ENCODE measurements at regions of chr16 and their contacts with region 1.

Region 1: DNA sequence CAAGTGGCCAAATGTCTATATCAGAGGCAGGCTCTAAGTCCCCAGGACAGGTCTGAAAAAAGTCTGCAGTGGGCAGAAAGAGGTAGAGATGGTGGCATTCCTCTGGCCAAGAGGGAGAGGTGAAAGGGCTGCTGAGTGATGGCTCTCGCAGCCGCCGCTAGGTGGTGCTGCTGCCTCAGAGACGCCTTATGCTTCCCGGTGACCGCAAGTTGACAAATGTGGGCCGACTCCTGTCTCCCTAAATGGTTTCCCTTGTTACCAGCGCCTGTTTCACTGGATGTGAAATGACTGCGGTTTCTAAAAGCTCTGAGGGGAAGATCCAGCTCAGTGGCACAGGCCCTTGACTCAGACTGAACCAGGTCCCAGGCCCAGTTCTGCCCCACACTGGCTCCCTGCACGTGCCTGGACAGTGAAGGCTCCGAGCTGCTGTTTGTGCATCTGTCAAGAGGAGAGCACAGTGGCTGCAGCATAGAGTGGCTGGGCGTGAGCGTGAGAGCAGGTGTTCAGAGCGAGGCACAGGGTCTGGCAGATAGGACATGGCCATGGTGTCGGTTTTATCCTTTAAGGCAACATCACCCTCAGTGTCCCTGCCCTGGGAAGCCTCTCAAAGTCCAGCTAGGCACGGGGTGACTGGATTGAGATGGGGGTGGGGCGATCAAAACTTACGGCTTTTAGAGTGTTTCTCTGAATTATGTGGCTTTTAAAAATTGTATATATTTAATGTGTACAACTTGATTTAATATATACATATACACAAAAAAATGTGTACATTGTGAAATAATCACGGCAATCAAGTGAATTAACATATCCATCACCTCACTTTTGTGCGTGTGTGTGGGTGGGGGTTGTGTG is 19.9 kb downstream of the CLEC16A start:
- DNase-seq: peak; percentile 77
- H3K4me3 ChIP-seq: no peak overlapping the region
- H3K27ac ChIP-seq: no peak overlapping the region
- H3K4me1 ChIP-seq: peaks cover 16% of the 10 kb centered on the region
- H3K27me3 ChIP-seq: no peaks in the 10 kb centered on the region
- CTCF ChIP-seq: peak; percentile 96 to 99

Region 2: DNA sequence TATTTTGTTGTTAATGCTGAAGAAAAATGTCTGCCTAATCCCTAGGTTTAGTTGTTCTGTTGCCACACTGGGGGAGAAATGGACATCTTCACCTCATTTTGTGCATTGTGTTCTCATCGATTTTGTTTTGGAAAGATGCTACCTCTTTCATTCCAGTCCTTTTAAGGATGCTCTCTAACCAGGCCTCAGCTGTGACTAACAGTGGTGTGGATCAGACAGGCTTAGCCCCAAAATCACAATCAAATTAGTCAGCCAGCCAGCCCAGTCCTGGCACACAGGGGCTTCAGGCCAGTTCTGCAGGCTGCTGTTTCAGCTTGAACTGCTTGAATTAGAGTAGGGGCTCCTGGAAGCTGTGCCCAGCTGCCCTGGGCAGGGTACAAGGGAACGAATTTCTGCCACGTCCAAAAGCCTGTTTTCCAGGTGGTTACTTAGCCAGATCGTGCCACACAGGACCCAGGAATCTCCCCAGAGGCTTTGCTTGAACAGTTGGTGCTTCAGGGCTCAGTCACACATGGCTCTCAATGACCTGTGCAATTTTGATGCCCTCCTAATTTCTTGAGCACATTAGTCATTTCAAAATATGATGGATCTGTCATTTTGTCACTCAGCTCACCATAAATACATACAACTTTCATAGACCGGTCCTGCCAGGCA is 40.8 kb after region 1 on chr16:
- CTCF ChIA-PET with region 1: no interaction called
- dilution Hi-C with region 1: no loop called
- in situ Hi-C with region 1: no loop called
- intact Hi-C with region 1: no loop called
- DNase-seq: peak; percentile 75
- H3K4me3 ChIP-seq: no peak overlapping the region
- H3K27ac ChIP-seq: peak overlapping the region; percentile 86
- H3K4me1 ChIP-seq: peaks cover 49% of the 10 kb centered on the region
- H3K27me3 ChIP-seq: no peaks in the 10 kb centered on the region
- CTCF ChIP-seq: no peak

Region 3: DNA sequence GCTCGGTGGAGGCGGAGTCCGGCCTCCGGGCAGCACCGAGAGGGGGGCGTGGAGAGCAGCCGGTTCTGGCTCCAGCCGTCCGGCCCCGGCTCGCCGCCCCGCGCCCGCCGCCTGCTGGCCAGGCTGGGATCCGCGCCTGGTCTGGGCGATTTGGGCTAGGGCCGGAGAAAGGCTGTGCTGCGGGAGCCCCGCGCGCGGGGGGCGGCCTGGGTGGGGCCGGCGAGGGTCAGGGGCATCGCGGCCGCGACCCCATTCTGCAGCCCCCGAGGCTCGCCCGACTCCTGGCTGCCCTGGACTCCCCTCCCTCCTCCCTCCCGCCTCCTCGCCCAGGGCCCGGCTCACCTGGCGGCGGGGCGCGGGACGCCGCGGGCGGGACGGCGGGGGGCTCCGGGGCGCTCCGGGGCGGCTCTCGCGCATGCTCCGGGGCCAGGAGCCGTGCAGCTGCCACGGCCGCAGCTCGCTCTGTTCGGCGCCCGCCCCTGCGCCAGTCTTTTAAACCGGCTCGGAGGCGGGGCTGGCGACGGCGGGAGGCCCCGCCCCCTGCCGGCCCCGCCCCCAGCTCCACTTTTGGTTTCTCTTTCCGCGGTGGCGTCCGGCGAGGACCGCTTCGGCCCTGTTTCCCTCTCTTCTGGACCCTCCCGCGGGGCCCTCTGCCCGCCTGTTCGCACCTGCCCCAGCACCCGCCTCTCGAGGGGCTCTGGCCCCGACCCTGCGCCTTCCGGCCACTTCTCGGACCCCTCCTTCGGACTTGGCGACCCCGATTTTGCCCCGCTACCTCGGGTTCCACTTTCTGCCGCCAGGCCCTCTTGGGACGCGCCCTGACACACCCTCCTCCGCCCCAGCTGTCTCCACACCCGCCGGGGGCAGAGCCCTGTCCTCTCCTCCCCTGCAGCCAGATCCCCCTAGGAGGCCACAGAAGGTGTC is 291.7 kb after region 1 on chr16 and contains the start of gene SOCS1:
- CTCF ChIA-PET with region 1: interaction called, 7 read pairs
- dilution Hi-C with region 1: no loop called
- in situ Hi-C with region 1: loop called (anchors 5 kb)
- intact Hi-C with region 1: loop called (anchors 1 kb)
- DNase-seq: peak; percentile 83
- H3K4me3 ChIP-seq: peak within 1 kb of the TSS; percentile 68 to 80 (median 79)
- H3K27ac ChIP-seq: peak within 1 kb of the TSS; percentile 60
- H3K4me1 ChIP-seq: peaks cover 23% of the 10 kb centered on the region
- H3K27me3 ChIP-seq: no peaks in the 10 kb centered on the region
- CTCF ChIP-seq: peak; percentile 60 to 69
- total RNA-seq, gene SOCS1: 2.0 to 7.9 TPM

Region 4: DNA sequence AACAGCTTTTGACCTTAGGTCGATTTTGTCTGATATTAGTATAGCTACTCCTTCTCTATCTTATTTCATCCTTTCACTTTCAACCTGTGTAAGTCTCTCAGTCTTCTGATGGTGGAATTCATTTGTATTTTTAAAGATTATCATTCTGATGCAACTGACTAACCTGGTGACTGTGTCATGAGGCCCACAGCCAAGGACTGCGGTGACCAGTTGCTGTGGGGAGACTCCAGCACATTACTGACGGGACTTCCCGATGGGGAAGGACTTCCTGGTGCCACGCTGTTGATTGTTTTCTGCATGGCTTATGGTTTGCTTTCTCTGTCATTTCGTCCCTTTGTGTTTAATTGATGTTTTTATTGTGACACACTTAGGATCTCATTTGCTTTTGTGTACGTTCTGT is 415.2 kb after region 1 on chr16:
- CTCF ChIA-PET with region 1: no interaction called
- dilution Hi-C with region 1: no loop called
- in situ Hi-C with region 1: loop called in 1 of 2 experiments (anchors 10 kb)
- intact Hi-C with region 1: no loop called
- DNase-seq: peak; percentile 25
- H3K4me3 ChIP-seq: no peak overlapping the region
- H3K27ac ChIP-seq: no peak overlapping the region
- H3K4me1 ChIP-seq: no peaks in the 10 kb centered on the region
- H3K27me3 ChIP-seq: no peaks in the 10 kb centered on the region
- CTCF ChIP-seq: no peak

Region 5: DNA sequence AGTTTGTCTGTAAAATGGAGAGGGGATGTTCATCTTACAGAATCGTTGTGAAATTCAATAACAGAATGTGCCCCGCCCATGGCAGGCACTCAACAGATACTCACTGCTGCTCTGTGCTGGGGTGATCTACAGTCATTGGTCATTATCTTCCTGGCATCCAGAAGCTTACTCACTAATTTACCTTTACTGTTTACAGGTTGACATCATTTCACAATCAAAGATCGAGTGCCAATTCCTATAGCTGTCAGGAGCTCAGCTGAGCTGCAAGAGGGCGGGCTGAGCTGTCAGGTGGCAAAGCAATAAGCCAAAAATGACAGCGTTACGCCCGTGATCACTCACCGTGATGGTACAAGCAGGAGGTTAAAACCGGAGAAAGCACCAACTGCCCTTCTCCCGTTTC is 571.2 kb after region 1 on chr16:
- CTCF ChIA-PET with region 1: no interaction called
- dilution Hi-C with region 1: no loop called
- in situ Hi-C with region 1: no loop called
- intact Hi-C with region 1: loop called (anchors 5 kb)
- DNase-seq: peak; percentile 82
- H3K4me3 ChIP-seq: no peak overlapping the region
- H3K27ac ChIP-seq: no peak overlapping the region
- H3K4me1 ChIP-seq: peaks cover 12% of the 10 kb centered on the region
- H3K27me3 ChIP-seq: no peaks in the 10 kb centered on the region
- CTCF ChIP-seq: no peak

Region 6: GRCh38 chr16:11667824-11668622 is 703.8 kb after region 1 on chr16 and contains the start of gene SNN:
- CTCF ChIA-PET with region 1: no interaction called
- dilution Hi-C with region 1: no loop called
- in situ Hi-C with region 1: loop called in 1 of 2 experiments (anchors 25 kb)
- intact Hi-C with region 1: no loop called
- DNase-seq: peak; percentile 79
- H3K4me3 ChIP-seq: peak within 1 kb of the TSS; percentile 65 to 90 (median 85)
- H3K27ac ChIP-seq: no peak within 1 kb of the TSS
- H3K4me1 ChIP-seq: peaks cover 49% of the 10 kb centered on the region
- H3K27me3 ChIP-seq: no peaks in the 10 kb centered on the region
- CTCF ChIP-seq: no peak
- total RNA-seq, gene SNN: 14.2 to 32.7 TPM

Region 7: GRCh38 chr16:12067714-12068401 is 1103.6 kb after region 1 on chr16:
- CTCF ChIA-PET with region 1: no interaction called
- dilution Hi-C with region 1: no loop called
- in situ Hi-C with region 1: no loop called
- intact Hi-C with region 1: loop called (anchors 5 kb)
- DNase-seq: peak; percentile 50
- H3K4me3 ChIP-seq: no peak overlapping the region
- H3K27ac ChIP-seq: no peak overlapping the region
- H3K4me1 ChIP-seq: peaks cover 2% of the 10 kb centered on the region
- H3K27me3 ChIP-seq: no peaks in the 10 kb centered on the region
- CTCF ChIP-seq: peak; percentile 95 to 98

Region 8: DNA sequence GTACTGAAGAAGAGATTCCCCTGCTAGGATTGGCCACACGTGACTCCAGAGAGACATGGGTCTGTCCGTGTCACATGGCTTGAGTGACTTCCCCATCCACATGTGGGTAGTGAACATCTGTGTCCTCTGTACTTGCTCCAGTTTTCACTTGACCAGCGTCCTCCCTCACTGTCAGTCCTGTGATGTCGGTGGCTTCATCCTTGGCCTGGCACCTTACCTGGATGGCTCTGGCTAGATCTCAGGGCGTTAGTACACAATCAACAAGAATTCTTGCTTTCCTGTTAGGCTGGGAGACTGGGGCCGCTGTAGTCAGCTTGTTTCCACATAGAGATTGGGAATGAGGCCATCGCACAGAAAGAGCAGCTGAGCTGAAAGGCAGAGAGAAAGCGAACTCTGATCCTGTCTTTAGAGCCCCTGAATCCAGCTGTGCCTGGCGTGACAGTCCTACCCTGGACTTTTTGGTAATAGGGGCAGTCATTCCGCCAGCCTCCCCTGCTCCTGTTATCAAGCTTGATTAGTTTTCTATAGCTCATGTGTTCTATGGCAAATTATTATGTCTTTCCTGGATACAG is 1239.6 kb after region 1 on chr16:
- CTCF ChIA-PET with region 1: no interaction called
- dilution Hi-C with region 1: no loop called
- in situ Hi-C with region 1: no loop called
- intact Hi-C with region 1: no loop called
- DNase-seq: no peak
- H3K4me3 ChIP-seq: no peak overlapping the region
- H3K27ac ChIP-seq: no peak overlapping the region
- H3K4me1 ChIP-seq: no peaks in the 10 kb centered on the region
- H3K27me3 ChIP-seq: no peaks in the 10 kb centered on the region
- CTCF ChIP-seq: no peak